GM12878 (cell line): ENCODE measurements at regions of chr21 and their contacts with region 1.

Region 1: GRCh38 chr21:34603002-34603709 is 11.8 kb downstream of the RCAN1 start:
- DNase-seq: no peak
- ATAC-seq: peak; percentile 100
- H3K4me3 ChIP-seq: no peak overlapping the region
- H3K27ac ChIP-seq: no peak overlapping the region
- H3K4me1 ChIP-seq: no peaks in the 10 kb centered on the region
- H3K27me3 ChIP-seq: no peaks in the 10 kb centered on the region
- CTCF ChIP-seq: peak; percentile 81 to 85 (median 83)
- EP300 ChIP-seq: no peak
- POLR2A ChIP-seq: no peak
- RAD21 ChIP-seq: peak; percentile 99

Region 2: DNA sequence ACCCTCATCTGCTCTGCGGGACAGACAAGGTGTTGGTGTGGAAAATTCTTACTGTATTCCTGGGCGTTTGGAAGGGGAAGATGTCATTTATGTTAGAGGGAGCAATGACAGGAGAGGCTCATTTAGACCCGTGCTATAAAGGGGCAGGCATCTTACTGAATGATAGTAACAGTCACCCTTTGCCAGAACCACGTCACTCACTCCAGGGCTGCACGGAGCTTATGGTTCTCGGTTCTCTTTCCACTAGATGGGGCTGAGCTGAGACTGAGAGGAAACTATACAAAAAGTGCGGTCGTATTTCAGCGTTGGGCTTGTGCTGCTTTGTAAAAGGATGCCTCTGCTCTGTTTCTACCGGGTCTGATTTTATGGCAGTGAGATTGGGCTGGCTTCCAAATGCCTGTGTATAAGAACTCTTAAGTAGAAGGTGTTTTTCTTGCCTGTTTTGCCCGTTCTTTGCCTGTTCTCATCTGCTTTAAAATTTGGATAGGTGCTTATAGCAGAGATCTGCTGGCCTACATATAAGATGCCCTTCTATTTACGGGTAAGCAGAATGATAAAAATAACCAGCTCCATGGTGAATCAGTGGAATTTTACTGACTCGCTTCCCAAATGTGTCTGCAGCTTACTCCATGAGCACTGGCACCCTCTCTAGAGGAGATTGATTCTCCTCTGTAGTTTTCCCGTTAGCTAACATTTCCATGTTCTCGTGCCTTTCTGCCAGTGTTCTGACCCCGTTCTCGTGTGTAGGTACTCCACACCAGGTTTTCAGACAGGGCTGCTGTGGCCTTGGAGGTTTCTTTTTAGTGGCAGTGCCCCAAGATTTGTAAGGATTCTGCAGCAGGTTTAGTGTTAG is 473.9 kb before region 1 on chr21:
- CTCF ChIA-PET with region 1: no interaction called
- POLR2A ChIA-PET with region 1: no interaction called
- RAD21 ChIA-PET with region 1: no interaction called
- SMC1A ChIA-PET with region 1: no interaction called
- in situ Hi-C with region 1: no loop called
- intact Hi-C with region 1: no loop called
- DNase-seq: no peak
- ATAC-seq: 0 out of 3 replicates have a peak, but pooled peaks have one; percentile 19
- H3K4me3 ChIP-seq: no peak overlapping the region
- H3K27ac ChIP-seq: no peak overlapping the region
- H3K4me1 ChIP-seq: no peaks in the 10 kb centered on the region
- H3K27me3 ChIP-seq: no peaks in the 10 kb centered on the region
- CTCF ChIP-seq: no peak
- EP300 ChIP-seq: no peak
- POLR2A ChIP-seq: no peak
- RAD21 ChIP-seq: no peak

Region 3: GRCh38 chr21:34362136-34362444 is 241.1 kb before region 1 on chr21:
- CTCF ChIA-PET with region 1: interaction called, 13 read pairs
- POLR2A ChIA-PET with region 1: no interaction called
- RAD21 ChIA-PET with region 1: interaction called, 3 read pairs
- SMC1A ChIA-PET with region 1: no interaction called
- in situ Hi-C with region 1: no loop called
- intact Hi-C with region 1: no loop called
- DNase-seq: no peak
- ATAC-seq: peak; percentile 24; the same call in 2 of the 3 replicates
- H3K4me3 ChIP-seq: no peak overlapping the region
- H3K27ac ChIP-seq: no peak overlapping the region
- H3K4me1 ChIP-seq: no peaks in the 10 kb centered on the region
- H3K27me3 ChIP-seq: peaks cover 0 to 3% of the 10 kb centered on the region in 2 experiments; a peak in 1 of 4 replicates
- CTCF ChIP-seq: no peak
- EP300 ChIP-seq: no peak
- POLR2A ChIP-seq: no peak
- RAD21 ChIP-seq: no peak

Region 4: DNA sequence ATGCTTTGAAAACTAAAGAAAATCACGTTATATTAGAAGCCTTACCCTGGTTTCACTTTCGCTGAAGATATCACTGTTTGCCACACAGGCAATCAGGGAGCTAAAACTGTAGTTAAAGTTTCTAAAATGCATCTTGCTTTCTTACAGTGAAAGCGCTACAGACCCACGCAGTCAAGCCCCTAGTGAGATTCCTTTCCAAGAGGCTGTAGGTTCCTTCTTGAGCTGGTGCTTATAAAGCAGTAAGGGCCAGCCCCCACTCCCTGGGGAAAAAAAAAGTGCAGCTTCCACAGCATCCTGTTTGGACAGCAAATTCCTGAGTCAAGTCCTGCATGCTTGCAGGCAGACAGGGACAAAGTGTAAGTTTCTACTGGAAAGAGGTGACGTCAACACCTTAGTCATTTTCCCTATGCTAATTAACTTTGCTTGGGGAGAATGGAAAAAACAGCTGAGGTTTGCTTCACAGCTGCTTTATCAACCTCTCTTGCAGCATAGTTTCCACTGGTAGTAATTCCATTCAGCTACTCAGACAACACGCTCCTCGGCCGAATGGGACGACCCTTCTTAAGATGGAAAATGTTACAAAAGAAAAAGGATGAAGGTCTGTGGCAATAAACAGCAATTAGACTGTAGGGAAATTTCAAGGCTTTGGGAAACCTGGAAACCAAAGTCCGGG is 76.4 kb before region 1 on chr21:
- CTCF ChIA-PET with region 1: interaction called, 26 read pairs
- POLR2A ChIA-PET with region 1: no interaction called
- RAD21 ChIA-PET with region 1: interaction called, 4 read pairs
- SMC1A ChIA-PET with region 1: interaction called, 8 read pairs
- in situ Hi-C with region 1: no loop called
- intact Hi-C with region 1: no loop called
- DNase-seq: no peak
- ATAC-seq: peak; percentile 89
- H3K4me3 ChIP-seq: peak overlapping the region; percentile 57
- H3K27ac ChIP-seq: peak overlapping the region; percentile 78
- H3K4me1 ChIP-seq: peaks cover 14% of the 10 kb centered on the region
- H3K27me3 ChIP-seq: no peaks in the 10 kb centered on the region
- CTCF ChIP-seq: no peak
- EP300 ChIP-seq: no peak
- POLR2A ChIP-seq: no peak
- RAD21 ChIP-seq: no peak

Region 5: GRCh38 chr21:34589511-34590282 is 13.5 kb before region 1 on chr21:
- CTCF ChIA-PET with region 1: interaction called, 12 read pairs
- POLR2A ChIA-PET with region 1: no interaction called
- RAD21 ChIA-PET with region 1: no interaction called
- SMC1A ChIA-PET with region 1: interaction called, 7 read pairs
- in situ Hi-C with region 1: no loop called
- intact Hi-C with region 1: no loop called
- DNase-seq: no peak
- ATAC-seq: no peak
- H3K4me3 ChIP-seq: no peak overlapping the region
- H3K27ac ChIP-seq: no peak overlapping the region
- H3K4me1 ChIP-seq: peaks cover under 1% of the 10 kb centered on the region; the same call in 1 of the 2 replicates
- H3K27me3 ChIP-seq: no peaks in the 10 kb centered on the region
- CTCF ChIP-seq: no peak
- EP300 ChIP-seq: no peak
- POLR2A ChIP-seq: no peak
- RAD21 ChIP-seq: no peak

Region 6: GRCh38 chr21:34619841-34620665 is 16.9 kb after region 1 on chr21:
- CTCF ChIA-PET with region 1: interaction called, 17 read pairs
- POLR2A ChIA-PET with region 1: no interaction called
- RAD21 ChIA-PET with region 1: interaction called, 11 read pairs
- SMC1A ChIA-PET with region 1: interaction called, 6 read pairs
- in situ Hi-C with region 1: no loop called
- intact Hi-C with region 1: no loop called
- DNase-seq: no peak
- ATAC-seq: no peak
- H3K4me3 ChIP-seq: no peak overlapping the region
- H3K27ac ChIP-seq: no peak overlapping the region
- H3K4me1 ChIP-seq: peaks cover 11% of the 10 kb centered on the region
- H3K27me3 ChIP-seq: no peaks in the 10 kb centered on the region
- CTCF ChIP-seq: no peak
- EP300 ChIP-seq: no peak
- POLR2A ChIP-seq: no peak
- RAD21 ChIP-seq: no peak